Activated CD4-positive, alpha-beta T cell treated with anti-CD3 and anti-CD28 coated beads, Interleukin-2, amount 10 ng/mL, durations not matched to agents 24 days and 14 days (primary cell): ENCODE measurements at regions of chr12 and their contacts with region 1.

Region 1: DNA sequence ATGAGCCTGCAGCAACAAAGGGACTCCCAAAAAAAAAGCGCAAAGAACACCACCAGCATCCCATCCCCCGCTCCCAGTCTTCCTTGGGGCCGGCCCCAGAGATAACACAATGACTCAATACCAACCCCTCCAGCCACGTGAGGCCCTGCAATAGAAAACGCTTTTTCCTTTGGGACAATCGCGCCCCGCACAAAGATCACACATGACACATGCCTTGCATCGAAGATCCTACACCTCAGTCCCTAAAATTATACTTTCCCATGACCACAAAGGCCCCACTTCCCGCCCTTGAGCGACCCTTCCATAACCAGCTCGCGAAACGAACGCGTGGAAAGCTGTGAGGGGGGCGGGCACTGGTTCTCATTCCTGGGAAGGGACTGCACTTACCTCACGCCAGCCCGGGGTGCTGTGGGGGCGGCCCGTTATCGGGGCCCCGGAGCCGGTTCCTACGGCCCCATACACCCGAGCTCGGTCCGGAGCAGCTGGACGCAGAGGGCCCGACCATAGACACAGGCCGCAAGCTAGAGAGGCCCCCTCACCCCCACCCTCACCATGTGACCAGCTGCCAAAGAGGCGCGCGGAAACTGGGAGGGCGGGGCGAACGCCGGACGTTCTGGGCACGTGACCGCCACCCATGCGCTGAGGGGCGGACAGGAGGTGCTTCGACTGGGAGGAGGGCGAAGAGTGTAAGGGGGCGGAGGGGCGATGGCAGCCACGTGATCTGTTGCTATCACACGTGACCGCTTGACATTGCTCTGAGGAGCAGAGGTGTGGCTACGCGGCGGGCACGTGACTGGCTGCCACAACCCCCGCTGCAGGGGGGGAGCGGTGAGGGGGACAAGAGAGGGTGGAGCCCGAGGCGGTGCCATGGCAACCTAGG is at the start of gene CDK4:
- DNase-seq: peak; percentile 99
- H3K4me3 Mint-ChIP-seq: peak within 1 kb of the TSS; percentile 96
- H3K27ac Mint-ChIP-seq: peak within 1 kb of the TSS; percentile 97
- H3K4me1 Mint-ChIP-seq: peaks cover 56% of the 10 kb centered on the region
- H3K27me3 Mint-ChIP-seq: no peaks in the 10 kb centered on the region
- total RNA-seq, gene CDK4: 240 and 248 TPM in 2 replicates

Region 2: GRCh38 chr12:55829967-55830600 is 1921.9 kb before region 1 on chr12:
- intact Hi-C with region 1: loop called (anchors 10 kb)
- DNase-seq: peak; percentile 81
- H3K4me3 Mint-ChIP-seq: peak overlapping the region; percentile 98
- H3K27ac Mint-ChIP-seq: peak overlapping the region; percentile 93
- H3K4me1 Mint-ChIP-seq: peaks cover 47% of the 10 kb centered on the region
- H3K27me3 Mint-ChIP-seq: no peaks in the 10 kb centered on the region

Region 3: GRCh38 chr12:57712701-57713100 is 39.3 kb before region 1 on chr12:
- intact Hi-C with region 1: no loop called
- DNase-seq: no peak
- H3K4me3 Mint-ChIP-seq: no peak overlapping the region
- H3K27ac Mint-ChIP-seq: no peak overlapping the region
- H3K4me1 Mint-ChIP-seq: peaks cover 3% of the 10 kb centered on the region
- H3K27me3 Mint-ChIP-seq: no peaks in the 10 kb centered on the region

Region 4: DNA sequence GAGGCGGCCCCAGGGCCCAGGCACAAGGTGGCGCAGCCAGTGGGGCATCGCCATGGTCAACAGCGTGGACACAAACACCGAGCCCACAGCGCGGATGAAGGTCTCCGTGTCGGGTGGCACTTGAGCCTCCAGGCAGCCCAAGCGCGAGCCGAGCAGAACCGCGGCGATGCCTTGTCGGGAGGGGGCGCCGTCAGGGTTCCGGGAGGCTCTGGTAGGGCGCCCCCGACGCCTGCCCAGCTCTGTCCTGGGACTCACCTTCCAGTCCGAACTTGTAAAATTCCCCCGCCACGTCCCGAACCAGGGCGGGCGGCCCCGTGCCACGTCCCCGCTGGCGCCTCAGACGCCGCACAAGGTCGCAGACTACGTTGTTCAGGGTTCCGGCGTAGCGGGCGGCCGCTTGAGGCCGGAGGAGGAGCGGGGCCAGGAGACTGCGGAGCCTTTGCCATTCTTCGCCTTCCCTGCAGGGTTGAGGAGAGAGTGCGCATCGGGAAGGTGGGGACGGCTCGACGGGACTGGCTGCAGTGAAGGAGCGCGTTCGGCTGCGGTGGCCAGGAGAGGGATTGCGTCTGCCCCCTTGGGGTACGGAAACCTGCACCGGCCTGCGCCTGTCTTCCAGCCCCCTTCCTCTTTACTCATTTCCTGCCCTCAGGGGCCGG is 13.1 kb after region 1 on chr12:
- intact Hi-C with region 1: loop called (anchors 1 kb)
- DNase-seq: peak; percentile 88
- H3K4me3 Mint-ChIP-seq: peak overlapping the region; percentile 93
- H3K27ac Mint-ChIP-seq: peak overlapping the region; percentile 85
- H3K4me1 Mint-ChIP-seq: peaks cover 36% of the 10 kb centered on the region
- H3K27me3 Mint-ChIP-seq: peaks cover 8% of the 10 kb centered on the region

Region 5: GRCh38 chr12:57771708-57772428 is 19.8 kb after region 1 on chr12 and contains the start of gene METTL1:
- intact Hi-C with region 1: loop called (anchors 1 kb)
- DNase-seq: peak; percentile 98
- H3K4me3 Mint-ChIP-seq: peak within 1 kb of the TSS; percentile 97
- H3K27ac Mint-ChIP-seq: peak within 1 kb of the TSS; percentile 99
- H3K4me1 Mint-ChIP-seq: peaks cover 21% of the 10 kb centered on the region
- H3K27me3 Mint-ChIP-seq: no peaks in the 10 kb centered on the region
- total RNA-seq, gene METTL1: 72.2 and 79.8 TPM in 2 replicates

Region 6: DNA sequence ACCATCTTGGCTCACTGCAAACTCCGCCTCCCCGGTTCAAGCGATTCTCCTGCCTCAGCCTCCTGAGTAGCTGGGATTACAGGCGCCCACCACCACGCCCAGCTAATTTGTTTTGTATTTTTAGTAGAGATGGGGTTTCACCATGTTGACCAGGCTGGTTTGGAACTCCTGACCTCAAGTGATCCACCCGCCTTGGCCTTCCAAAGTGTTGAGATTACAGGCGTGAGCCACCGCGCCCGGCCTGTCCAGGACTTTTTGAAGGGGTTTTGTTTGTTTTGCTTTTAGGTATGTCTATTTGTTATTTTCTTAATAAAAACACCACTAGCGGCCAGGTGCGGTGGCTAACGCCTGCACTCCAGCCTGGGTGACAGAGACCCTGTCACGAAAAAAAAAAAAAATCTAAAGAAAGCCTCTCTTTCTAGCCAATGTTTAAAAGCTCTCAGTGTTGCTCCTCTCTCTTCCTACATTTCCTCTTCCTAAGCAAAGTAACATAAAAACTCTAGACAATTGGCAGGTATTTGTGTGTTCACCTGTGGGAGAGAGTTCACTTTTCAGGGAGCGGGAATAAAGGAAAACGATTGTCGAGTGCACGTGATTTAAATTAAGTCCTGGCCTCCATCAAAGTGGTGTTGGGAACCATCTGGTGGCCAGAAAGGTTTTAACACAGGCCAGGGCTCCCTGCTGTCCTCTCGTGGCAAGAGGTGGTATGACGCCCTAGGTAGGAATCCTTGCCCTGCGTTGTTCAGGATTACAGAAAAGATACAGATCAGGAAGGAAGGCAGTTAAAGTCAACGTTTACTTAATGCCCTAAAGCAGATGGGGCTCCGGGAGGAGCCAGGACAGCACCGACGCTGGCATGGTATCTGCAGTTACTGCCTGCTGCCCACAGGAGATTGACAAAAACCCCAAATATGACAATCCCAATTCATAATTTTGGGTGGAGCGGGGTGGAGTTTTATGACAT is 153.1 kb after region 1 on chr12:
- intact Hi-C with region 1: loop called (anchors 5 kb)
- DNase-seq: peak; percentile 95
- H3K4me3 Mint-ChIP-seq: peak overlapping the region; percentile 53
- H3K27ac Mint-ChIP-seq: peak overlapping the region; percentile 32
- H3K4me1 Mint-ChIP-seq: peaks cover 6% of the 10 kb centered on the region
- H3K27me3 Mint-ChIP-seq: peaks cover 35% of the 10 kb centered on the region

Region 7: DNA sequence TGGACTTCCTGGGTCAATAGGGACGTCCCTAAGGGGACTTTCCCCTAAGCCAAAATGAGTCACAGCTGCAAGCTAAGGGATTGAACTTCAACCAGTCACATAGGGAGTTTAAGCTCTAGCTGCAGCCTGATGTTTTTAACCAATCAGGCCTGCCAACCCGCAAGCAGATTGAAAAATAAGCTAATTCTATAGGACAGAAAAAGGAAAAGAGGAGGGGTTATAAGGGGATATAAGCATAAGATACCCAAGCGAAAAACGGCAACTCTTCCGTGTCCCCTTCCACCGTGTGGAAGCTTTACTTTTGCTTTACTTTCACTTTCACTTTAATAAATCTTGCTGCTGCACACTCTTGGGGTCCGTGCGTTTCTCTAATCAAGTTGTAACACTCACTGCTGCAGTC is 213.7 kb after region 1 on chr12:
- intact Hi-C with region 1: no loop called
- DNase-seq: no peak
- H3K4me3 Mint-ChIP-seq: no peak overlapping the region
- H3K27ac Mint-ChIP-seq: no peak overlapping the region
- H3K4me1 Mint-ChIP-seq: no peaks in the 10 kb centered on the region
- H3K27me3 Mint-ChIP-seq: peaks cover 11% of the 10 kb centered on the region